ENCODE measurements at regions of chr19 and their contacts with region 1.

Region 1: DNA sequence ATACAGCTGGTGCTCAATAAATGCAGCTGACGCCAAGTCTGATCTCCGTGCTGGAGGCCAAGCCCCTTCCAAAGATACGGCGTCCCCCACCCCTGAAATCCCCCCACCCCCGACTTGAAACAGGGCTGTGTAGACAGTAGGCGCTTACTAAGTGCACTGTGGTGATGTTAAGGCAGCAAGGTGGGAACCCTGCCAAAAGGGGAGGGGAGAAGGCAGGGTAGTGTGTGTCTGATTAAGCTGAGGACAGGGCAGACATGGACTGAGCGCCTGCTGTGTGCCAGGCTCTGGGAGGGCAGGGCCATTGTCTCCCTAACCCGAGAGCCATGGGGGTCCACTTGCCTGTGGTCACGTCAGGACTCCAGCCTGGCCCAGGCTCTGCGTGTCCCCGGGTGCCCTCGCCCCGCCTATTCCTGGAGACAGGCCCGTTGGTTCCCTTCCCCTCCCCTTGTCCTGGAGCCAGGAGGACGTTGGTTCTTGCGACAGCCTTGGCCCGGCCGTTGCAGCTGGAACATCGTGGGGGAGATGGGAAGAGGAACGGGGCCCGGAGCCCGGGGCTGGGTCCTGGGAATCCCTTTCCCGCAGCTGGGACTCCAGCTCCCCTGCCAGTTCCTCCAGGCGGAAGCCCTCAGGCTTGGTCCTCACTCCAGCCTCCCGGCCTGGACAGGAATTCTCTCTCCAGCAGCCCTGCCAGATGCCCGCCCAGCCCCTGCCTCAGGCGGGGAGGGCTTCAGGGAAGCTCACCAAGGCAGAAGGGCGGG is 1.7 kb upstream of the ELANE start:
- DNase-seq: peak in 2 of 3 donors; percentile 47 to 49
- H3K4me3 ChIP-seq: peak overlapping the region in 2 of 3 experiments; percentile 7 to 60
- H3K4me3 Mint-ChIP-seq: peak overlapping the region; percentile 52 to 59
- H3K27ac ChIP-seq: no peak overlapping the region
- H3K27ac Mint-ChIP-seq: peak overlapping the region in 2 of 7 donors; percentile 75 to 82
- H3K4me1 ChIP-seq: peaks cover 38 to 54% of the 10 kb centered on the region in 2 donors
- H3K4me1 Mint-ChIP-seq: peaks cover 50% of the 10 kb centered on the region
- H3K27me3 ChIP-seq: peaks cover 0 to 22% of the 10 kb centered on the region in 2 donors
- H3K27me3 Mint-ChIP-seq: peaks cover 20 to 43% (median 31%) of the 10 kb centered on the region in 3 donors
- CTCF ChIP-seq: no peak

Region 2: GRCh38 chr19:814258-815078 is 35.9 kb before region 1 on chr19:
- intact Hi-C with region 1: loop called in 1 of 2 experiments (anchors 5 kb)
- DNase-seq: no peak
- H3K4me3 ChIP-seq: no peak overlapping the region
- H3K4me3 Mint-ChIP-seq: no peak overlapping the region
- H3K27ac ChIP-seq: no peak overlapping the region
- H3K27ac Mint-ChIP-seq: peak overlapping the region in 1 of 7 donors; percentile 0
- H3K4me1 ChIP-seq: no peaks in the 10 kb centered on the region
- H3K4me1 Mint-ChIP-seq: peaks cover 1% of the 10 kb centered on the region
- H3K27me3 ChIP-seq: no peaks in the 10 kb centered on the region
- H3K27me3 Mint-ChIP-seq: peaks cover 0 to 1% (median 0%) of the 10 kb centered on the region in 3 donors
- CTCF ChIP-seq: no peak

Measured in CD14-positive monocyte (primary cell).